Mammary epithelial cell (primary cell): ENCODE measurements at regions of chr4 and their contacts with region 1.

Region 1: GRCh38 chr4:145180298-145181090 is at the start of gene OTUD4:
- DNase-seq: peak; percentile 93
- H3K4me3 ChIP-seq: peak within 1 kb of the TSS; percentile 69 to 86 (median 72)
- H3K27ac ChIP-seq: peak within 1 kb of the TSS; percentile 88
- H3K4me1 ChIP-seq: peaks cover 18% of the 10 kb centered on the region
- H3K27me3 ChIP-seq: no peaks in the 10 kb centered on the region
- CTCF ChIP-seq: peak in 1 of 2 donors; percentile 26
- total RNA-seq, gene OTUD4: 32.3 to 49.1 TPM

Region 2: DNA sequence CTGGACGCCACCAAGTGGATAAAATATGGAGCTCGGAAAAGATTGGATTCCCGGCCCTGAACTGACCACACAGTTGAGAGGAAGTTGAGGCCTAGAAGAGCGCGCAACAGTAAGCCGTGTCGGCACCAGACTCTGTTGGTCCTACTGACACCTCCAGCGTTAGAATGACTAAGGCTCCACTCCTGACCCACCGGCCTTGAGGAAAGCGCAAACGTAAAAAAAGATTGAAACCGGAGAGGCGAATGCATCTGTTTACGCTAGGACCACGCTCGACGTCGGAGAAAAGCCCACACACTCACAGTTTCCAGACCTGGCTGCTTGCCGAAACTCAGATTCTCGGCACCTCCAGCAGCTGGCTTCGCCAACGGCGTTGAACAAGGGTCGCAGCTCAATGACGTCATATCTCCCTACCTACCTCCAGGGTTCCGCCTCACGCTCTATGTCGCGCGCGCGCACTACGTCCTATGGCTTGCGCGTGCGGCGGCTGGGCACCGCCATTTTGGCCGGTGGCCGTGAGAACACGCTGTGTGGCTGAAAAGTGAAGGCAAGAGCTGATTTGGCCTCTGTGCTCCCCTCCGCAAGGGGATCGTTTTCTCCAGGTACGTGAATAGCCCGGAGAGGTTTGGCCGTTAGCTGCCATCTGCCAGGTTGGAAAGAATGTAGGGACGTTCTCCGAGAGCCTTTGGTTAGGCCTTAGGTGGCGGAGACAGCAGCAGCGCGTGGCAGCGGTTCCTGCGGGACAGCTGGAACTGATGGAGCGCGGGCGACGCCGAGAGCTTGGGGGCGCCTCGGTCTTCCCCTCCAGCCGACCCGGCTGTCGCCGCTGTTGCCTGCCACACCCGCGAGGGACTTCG is 82.4 kb before region 1 on chr4 and contains the starts of genes ABCE1 and ANAPC10:
- CTCF ChIA-PET with region 1: no interaction called
- dilution Hi-C with region 1: loop called (anchors 5 kb)
- in situ Hi-C with region 1: no loop called
- intact Hi-C with region 1: no loop called
- DNase-seq: peak; percentile 96
- H3K4me3 ChIP-seq: peak within 1 kb of the TSS; percentile 62 to 96 (median 89)
- H3K27ac ChIP-seq: peak within 1 kb of the TSS; percentile 92
- H3K4me1 ChIP-seq: peaks cover 19% of the 10 kb centered on the region
- H3K27me3 ChIP-seq: no peaks in the 10 kb centered on the region
- CTCF ChIP-seq: peak in 1 of 2 donors; percentile 14
- total RNA-seq, gene ABCE1: 96.3 to 132 TPM
- total RNA-seq, gene ANAPC10: 18.3 to 25.1 TPM

Region 3: GRCh38 chr4:145195167-145195566 is 14.7 kb after region 1 on chr4:
- CTCF ChIA-PET with region 1: no interaction called
- dilution Hi-C with region 1: no loop called
- in situ Hi-C with region 1: no loop called
- intact Hi-C with region 1: loop called (anchors 2 kb)
- DNase-seq: peak; percentile 1
- H3K4me3 ChIP-seq: no peak overlapping the region
- H3K27ac ChIP-seq: peak overlapping the region; percentile 85
- H3K4me1 ChIP-seq: no peaks in the 10 kb centered on the region
- H3K27me3 ChIP-seq: no peaks in the 10 kb centered on the region
- CTCF ChIP-seq: no peak